IMR-90 (cell line): ENCODE measurements at regions of chr1 and their contacts with region 1.

Region 1: DNA sequence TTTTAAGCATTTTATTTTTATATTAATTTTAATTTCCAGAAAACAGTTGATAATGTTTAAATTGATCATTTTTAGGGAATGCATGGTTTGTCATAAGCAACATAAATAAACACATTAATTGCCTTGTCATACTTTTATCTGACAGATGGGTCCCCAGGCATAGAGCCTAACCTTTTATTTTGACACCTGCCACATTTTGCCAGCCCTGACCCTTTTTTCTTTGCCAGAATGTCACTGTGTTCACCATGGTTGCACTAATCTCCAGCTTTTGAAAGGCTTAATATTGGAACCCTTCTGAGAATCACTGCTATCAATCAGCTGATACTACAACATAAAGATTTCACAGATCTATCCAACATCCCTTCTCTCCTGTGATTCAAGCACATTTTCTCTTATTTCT is 56.0 kb upstream of the DPYD start:
- DNase-seq: no peak
- ATAC-seq: no peak
- H3K4me3 ChIP-seq: no peak overlapping the region
- H3K27ac ChIP-seq: no peak overlapping the region
- H3K4me1 ChIP-seq: no peaks in the 10 kb centered on the region
- H3K27me3 ChIP-seq: no peaks in the 10 kb centered on the region
- CTCF ChIP-seq: no peak
- POLR2A ChIP-seq: no peak
- RAD21 ChIP-seq: no peak

Region 2: GRCh38 chr1:97943354-97943753 is 33.4 kb before region 1 on chr1:
- CTCF ChIA-PET with region 1: no interaction called
- POLR2A ChIA-PET with region 1: no interaction called
- dilution Hi-C with region 1: no loop called
- in situ Hi-C with region 1: no loop called
- intact Hi-C with region 1: loop called (anchors 5 kb)
- DNase-seq: peak; percentile 78
- ATAC-seq: peak; percentile 83
- H3K4me3 ChIP-seq: no peak overlapping the region
- H3K27ac ChIP-seq: peak overlapping the region; percentile 20; the same call in 1 of the 2 replicates
- H3K4me1 ChIP-seq: peaks cover 4% of the 10 kb centered on the region
- H3K27me3 ChIP-seq: no peaks in the 10 kb centered on the region
- CTCF ChIP-seq: no peak
- POLR2A ChIP-seq: no peak
- RAD21 ChIP-seq: no peak